Activated naive CD4-positive, alpha-beta T cell treated with anti-CD3 and anti-CD28 coated beads for 36 hours (primary cell): ENCODE measurements at regions of chr19 and their contacts with region 1.

Region 1: DNA sequence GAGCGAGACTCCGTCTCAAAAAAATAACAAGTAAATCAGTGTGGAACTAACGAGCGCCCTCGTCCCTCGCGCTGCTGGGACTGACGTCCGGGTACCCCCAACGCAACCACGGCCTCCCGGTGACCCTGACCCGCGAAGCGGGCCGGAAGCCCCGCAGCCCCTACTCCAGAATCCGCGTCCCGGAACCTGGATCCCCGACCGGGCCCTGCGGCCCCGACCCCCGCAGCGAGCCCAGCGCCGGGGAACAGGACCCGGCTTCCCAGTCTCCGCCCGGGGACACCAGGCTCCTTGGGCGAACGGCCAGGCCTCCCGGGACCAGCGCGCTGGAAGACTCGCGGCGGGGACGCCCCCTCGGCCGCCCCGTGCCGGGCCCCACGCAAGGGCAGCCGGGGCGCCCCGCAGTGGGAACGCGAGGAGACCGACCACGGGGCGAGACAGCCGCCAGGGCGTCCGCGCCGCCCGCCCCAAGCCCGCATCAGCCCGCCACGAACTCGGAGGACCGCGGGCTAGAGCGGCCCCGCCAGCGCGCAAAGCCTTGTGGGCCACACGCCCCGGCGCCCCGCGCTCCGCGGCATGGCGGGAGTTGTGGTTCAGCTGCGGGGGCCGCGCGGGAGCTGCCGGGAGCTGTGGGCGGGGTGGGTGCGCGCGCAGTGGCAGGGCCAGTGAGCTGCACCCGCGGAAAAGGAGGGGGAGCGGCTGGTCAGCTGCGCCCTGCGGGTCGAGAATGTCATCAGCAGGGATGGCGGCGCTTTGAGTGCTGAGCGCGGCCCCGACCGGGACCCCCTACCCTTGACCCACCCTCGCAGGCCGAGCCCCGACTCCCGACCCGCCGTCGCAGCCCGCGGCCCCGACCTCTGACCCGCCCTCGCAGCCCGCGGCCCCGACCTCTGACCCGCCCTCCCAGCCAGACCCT is 7.5 kb upstream of the MADCAM1 start:
- DNase-seq: peak; percentile 93
- H3K4me3 Mint-ChIP-seq: peak overlapping the region; percentile 81
- H3K27ac Mint-ChIP-seq: peak overlapping the region; percentile 86
- H3K4me1 Mint-ChIP-seq: peaks cover 11% of the 10 kb centered on the region
- H3K27me3 Mint-ChIP-seq: peaks cover 20% of the 10 kb centered on the region

Region 2: DNA sequence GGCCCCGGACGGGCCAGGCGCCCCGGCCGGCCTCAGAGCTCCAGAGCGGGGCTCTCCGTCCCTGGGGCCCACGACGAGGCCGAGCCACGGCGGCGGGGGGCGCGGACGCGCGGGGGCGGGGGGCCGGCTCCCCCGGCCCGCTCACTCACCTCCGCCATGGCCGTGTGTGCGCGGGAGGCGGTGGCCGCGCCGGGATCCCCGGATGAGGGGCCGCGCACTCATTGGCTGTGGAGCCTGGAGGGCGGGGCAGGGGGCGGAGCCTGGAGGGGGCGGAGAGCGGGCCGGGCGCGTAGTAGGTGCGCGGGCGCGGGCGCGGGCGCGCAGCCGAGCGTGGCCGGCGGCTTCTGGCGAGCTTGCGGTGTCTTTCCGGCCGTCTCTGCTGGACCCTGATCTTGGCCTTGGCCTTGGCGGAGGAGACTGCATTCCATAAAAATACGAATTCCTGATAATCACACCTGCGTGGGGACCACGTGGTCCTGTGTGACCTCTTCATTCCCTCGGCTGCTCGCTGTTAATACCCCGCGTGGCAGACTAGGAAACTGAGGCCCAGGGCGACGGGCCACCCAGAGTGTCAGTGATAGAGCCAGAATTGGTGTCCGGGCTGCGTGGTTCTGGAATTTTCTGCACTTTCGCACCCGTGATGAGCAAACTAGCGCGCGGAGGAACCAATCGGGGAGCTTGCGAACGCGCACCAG is 144.0 kb before region 1 on chr19 and contains the start of gene MIER2:
- CTCF ChIA-PET with region 1: no interaction called
- intact Hi-C with region 1: loop called (anchors 2 kb)
- DNase-seq: peak; percentile 89
- H3K4me3 Mint-ChIP-seq: peak within 1 kb of the TSS; percentile 75
- H3K27ac Mint-ChIP-seq: peak within 1 kb of the TSS; percentile 10
- H3K4me1 Mint-ChIP-seq: peaks cover 48% of the 10 kb centered on the region
- H3K27me3 Mint-ChIP-seq: peaks cover 9% of the 10 kb centered on the region
- total RNA-seq, gene MIER2: 19.4 to 20.4 TPM